HCT116 (cell line): ENCODE measurements at regions of chr16 and their contacts with region 1.

Region 1: DNA sequence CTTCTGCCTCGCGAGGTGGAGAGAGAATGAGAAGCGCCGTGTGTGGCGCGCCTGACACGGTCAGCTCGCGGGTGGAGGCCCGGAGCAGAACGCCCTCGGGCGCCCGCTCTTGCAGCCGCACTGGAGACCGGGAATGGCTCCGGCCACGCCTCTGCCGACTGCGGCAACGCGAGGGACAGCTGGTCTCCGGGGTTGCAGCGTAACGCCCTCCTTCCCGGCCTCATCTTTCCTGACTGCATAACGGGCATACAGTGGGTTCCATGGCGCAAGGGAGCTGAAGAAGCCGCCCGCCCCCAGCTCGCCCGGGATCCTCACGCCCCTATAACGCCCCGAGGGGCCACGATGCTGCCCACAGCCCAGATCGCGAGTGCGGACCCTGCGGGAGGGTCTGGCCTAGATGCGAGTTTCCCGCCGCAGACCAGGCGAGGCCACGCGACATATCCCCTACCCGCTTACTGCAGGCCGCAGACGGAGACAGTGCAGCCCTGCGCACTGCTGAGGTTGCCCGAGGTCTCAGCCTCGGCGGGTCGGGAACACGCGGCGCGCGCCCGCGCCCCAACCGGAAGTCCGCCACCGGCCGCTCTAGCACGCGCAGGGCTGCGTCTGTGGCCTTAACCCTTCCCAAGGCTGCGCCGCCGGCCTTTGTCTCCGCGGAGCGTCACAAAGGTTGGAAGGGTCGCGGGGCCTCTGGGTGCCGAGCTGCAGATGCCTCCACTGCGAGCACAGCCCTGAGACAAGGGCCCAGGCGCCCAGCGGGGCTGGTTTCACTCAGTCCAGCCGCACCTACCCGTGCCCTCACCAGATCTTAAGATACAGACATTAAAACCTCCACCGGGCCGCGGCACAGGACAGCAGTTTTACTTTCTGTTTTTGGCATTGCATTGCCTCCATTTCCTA is 18.8 kb downstream of the BCL7C start:
- DNase-seq: peak; percentile 74
- ATAC-seq: peak; percentile 91
- H3K4me3 ChIP-seq: peak overlapping the region; percentile 87 to 89
- H3K27ac ChIP-seq: peak overlapping the region; percentile 97
- H3K4me1 ChIP-seq: peaks cover 0 to 26% of the 10 kb centered on the region in 2 experiments; a peak in 3 of 4 replicates
- H3K27me3 ChIP-seq: no peaks in the 10 kb centered on the region
- CTCF ChIP-seq: no peak
- POLR2A ChIP-seq: peak; percentile 96
- RAD21 ChIP-seq: peak; percentile 18; the same call in 1 of the 2 replicates

Region 2: GRCh38 chr16:30582611-30583340 is 292.3 kb before region 1 on chr16:
- CTCF ChIA-PET with region 1: no interaction called
- POLR2A ChIA-PET with region 1: no interaction called
- RAD21 ChIA-PET with region 1: no interaction called
- intact Hi-C with region 1: no loop called
- DNase-seq: no peak
- ATAC-seq: no peak
- H3K4me3 ChIP-seq: no peak overlapping the region
- H3K27ac ChIP-seq: no peak overlapping the region
- H3K4me1 ChIP-seq: peaks cover 0 to 6% of the 10 kb centered on the region in 2 experiments; a peak in 2 of 4 replicates
- H3K27me3 ChIP-seq: no peaks in the 10 kb centered on the region
- CTCF ChIP-seq: no peak
- POLR2A ChIP-seq: no peak
- RAD21 ChIP-seq: no peak

Region 3: DNA sequence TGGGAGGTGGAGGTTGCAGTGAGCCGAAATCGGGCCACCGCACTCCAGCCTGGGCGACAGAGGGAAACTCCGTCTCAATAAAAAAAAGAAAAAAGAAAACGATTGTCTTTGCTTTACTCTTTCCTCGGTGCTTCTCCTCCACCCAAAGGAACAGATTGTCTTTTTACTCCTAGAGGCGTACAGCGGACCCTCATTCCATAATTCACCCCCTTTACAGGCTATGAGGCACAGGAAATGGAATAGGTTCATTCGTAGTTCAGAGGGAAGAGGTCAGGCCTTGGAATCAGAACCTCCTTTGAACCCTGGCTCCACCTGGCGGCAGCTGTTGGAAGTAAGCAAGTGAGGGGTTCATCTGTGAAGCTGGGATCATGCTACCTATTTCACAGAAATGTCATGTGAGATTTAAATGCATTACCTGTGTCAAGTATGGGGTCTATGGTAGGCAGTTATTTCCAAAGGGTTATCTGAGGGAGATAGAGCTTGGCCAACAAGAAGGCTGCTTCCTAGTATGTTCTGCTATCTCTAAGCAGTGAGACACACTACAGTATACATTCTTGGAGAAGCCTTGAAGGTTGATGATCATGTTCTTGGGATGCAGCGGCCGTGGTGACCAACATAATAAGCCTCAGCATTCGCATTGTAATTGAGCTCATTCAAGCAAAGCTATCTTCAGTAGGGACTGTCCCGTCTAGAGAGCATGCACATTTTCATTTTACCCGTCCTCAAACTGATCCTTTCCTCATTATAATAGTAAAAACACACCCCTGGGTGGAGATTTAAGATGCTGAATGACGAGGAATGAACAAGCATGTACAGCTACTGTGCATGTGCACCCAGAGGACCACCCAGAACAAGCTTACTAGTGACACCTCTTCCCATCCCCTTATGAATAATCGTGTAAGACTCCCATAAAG is 246.2 kb before region 1 on chr16:
- CTCF ChIA-PET with region 1: no interaction called
- POLR2A ChIA-PET with region 1: no interaction called
- RAD21 ChIA-PET with region 1: no interaction called
- intact Hi-C with region 1: no loop called
- DNase-seq: peak; percentile 70
- ATAC-seq: peak; percentile 94
- H3K4me3 ChIP-seq: no peak overlapping the region
- H3K27ac ChIP-seq: 0 out of 2 replicates have a peak overlapping the region, but pooled peaks have one; percentile 18
- H3K4me1 ChIP-seq: peaks cover 4 to 14% of the 10 kb centered on the region in 2 experiments; a peak in 3 of 4 replicates
- H3K27me3 ChIP-seq: no peaks in the 10 kb centered on the region
- CTCF ChIP-seq: peak; percentile 86 to 94 (median 93)
- POLR2A ChIP-seq: no peak
- RAD21 ChIP-seq: peak; percentile 89

Region 4: GRCh38 chr16:30786936-30787612 is 88.0 kb before region 1 on chr16 and contains the start of gene ZNF629:
- CTCF ChIA-PET with region 1: no interaction called
- POLR2A ChIA-PET with region 1: interaction called, 4 read pairs
- RAD21 ChIA-PET with region 1: no interaction called
- intact Hi-C with region 1: loop called (anchors 5 kb)
- DNase-seq: peak; percentile 39
- ATAC-seq: peak; percentile 84
- H3K4me3 ChIP-seq: peak within 1 kb of the TSS; percentile 92 to 94
- H3K27ac ChIP-seq: peak within 1 kb of the TSS; percentile 78
- H3K4me1 ChIP-seq: peaks cover 7 to 22% of the 10 kb centered on the region in 2 experiments; a peak in 3 of 4 replicates
- H3K27me3 ChIP-seq: no peaks in the 10 kb centered on the region
- CTCF ChIP-seq: no peak
- POLR2A ChIP-seq: no peak
- RAD21 ChIP-seq: no peak
- total RNA-seq, gene ZNF629: 18.4 TPM

Region 5: DNA sequence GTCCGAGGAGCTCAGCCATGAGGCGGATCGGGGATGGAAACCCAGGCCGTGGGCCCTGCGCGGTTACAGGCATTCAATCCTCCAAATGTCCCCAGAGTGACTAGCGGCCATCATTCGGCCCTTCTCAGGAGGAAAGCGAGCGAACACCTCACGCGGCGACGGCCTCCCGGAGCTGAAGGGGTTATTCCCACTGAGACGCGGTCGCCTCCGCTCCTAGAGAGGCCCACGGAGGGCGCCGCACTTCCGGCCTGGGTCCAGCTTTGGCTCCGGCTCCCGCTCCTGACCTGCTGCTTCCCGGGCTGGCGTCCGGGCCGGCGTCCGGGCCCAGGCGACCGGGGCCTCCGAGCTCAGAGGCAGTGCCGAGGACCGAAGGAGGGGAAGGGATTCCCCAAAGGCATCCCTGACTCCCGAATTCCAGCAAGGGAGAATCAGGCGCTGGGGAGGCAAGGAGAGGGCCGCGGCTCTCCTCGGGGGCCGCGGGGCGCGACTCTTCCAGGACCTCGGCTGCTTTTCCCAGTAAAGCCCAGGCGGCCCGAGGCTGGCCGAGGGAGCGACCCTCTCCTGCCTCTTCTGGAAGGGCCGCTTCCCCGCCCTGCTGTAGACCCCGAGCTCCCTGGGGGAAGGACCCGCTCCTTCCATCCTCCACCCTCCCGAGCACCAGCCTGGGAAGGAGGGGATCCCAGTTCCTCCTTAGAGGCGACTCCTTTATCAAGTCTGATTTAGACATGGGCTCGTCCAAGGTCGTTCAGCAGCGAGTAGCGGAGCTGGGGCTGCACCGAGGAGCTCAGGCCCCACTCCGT is 69.5 kb before region 1 on chr16:
- CTCF ChIA-PET with region 1: no interaction called
- POLR2A ChIA-PET with region 1: interaction called, 15 read pairs
- RAD21 ChIA-PET with region 1: no interaction called
- intact Hi-C with region 1: loop called (anchors 5 kb)
- DNase-seq: peak; percentile 56
- ATAC-seq: peak; percentile 92
- H3K4me3 ChIP-seq: peak overlapping the region; percentile 72 to 87
- H3K27ac ChIP-seq: peak overlapping the region; percentile 93
- H3K4me1 ChIP-seq: peaks cover 8 to 16% of the 10 kb centered on the region in 2 experiments; a peak in 3 of 4 replicates
- H3K27me3 ChIP-seq: no peaks in the 10 kb centered on the region
- CTCF ChIP-seq: no peak
- POLR2A ChIP-seq: peak; percentile 91
- RAD21 ChIP-seq: no peak; the same call in 1 of the 2 replicates